Naive thymus-derived CD8-positive, alpha-beta T cell (primary cell): ENCODE measurements at regions of chr1 and their contacts with region 1.

Region 1: DNA sequence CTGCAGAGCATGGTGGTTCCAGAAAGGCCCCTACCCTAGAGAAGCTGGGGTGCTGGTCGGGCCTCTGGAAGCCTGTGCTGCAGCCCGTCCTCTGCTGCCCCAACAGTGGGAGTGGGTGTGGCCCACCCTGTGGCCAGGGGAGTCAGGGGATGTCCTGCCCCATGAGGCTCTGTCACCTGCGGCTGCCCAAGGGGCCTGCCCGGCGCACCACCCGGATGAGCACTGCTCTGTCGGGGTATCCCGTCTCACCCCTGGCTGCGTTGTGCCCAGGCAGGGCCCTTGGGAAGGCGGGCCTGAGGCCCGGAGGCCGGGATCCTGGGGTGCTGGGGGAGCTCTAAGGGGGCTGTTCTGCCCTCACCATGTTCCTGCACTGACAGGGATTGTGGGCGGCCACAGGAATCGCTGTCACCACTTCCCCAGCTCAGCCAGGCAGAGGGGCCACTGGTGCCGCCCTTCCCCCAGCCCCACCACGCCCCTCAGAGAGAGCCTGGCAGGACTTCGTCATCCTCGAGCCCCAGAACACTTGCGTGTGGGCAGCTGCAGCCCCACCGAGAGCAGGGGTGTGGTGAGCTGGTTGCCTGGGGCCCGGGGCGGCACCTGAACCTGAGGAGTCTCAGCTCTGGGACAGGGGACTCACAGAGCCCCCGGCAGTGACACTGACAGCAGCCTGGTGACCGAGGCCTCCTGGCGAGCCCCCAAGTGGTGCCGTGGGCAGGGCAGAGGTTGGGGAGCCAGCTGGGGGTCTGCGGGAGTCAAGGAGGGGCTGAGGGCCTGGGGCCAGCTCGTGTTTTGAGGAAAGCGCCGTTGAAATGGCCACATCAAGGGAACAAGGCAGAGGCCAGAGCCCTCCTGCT is 20.2 kb downstream of the PANK4 start:
- DNase-seq: no peak
- ATAC-seq: peak; percentile 9 to 16
- H3K4me3 Mint-ChIP-seq: no peak overlapping the region
- H3K27ac Mint-ChIP-seq: no peak overlapping the region
- H3K4me1 Mint-ChIP-seq: peaks cover 0 to 4% (median 0%) of the 10 kb centered on the region in 4 donors
- H3K27me3 Mint-ChIP-seq: no peaks in the 10 kb centered on the region

Region 2: DNA sequence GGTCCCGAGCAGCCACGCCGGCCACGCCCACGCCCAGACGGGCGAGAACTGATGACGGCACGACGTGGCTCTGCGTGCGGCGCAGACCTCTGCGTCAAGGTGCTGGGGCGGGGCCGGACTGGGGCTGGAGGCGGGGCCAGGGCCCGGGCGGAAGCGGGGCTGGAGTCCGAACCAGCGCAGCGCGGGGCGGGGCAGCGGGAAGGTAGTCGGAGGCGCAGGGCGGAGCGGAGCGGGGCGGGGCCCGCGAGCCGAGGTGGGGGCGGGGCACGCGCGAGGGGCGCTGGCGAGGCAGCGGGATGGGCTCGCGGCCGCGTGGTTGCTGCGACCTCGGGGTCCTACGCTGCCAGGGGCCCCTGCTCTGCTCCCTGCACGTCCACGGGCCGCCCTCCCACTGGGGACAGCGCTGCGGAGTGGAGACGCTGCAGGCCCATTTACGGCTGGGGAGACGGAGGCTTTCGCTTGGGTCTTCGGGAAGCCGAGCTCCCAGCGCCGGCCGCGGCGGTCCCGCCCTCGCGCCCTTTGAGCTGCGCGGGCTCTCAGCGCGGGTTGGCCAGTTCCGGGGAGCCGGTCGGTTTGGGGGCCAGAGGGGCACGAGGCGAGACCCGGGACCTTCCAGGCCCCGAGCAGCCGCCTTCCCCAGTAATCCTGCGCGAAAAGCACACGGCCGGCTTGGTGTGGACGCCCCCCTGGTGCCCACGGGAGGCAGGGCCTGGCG is 93.6 kb before region 1 on chr1 and contains the start of gene PEX10:
- POLR2A ChIA-PET with region 1: no interaction called
- DNase-seq: peak; percentile 96 to 100 (median 98)
- ATAC-seq: peak; percentile 78 to 88
- H3K4me3 Mint-ChIP-seq: peak within 1 kb of the TSS; percentile 77 to 91 (median 86)
- H3K27ac Mint-ChIP-seq: peak within 1 kb of the TSS; percentile 55 to 96 (median 87)
- H3K4me1 Mint-ChIP-seq: peaks cover 27 to 54% (median 41%) of the 10 kb centered on the region in 4 donors
- H3K27me3 Mint-ChIP-seq: no peaks in the 10 kb centered on the region
- polyA plus RNA-seq, gene PEX10: 7.5 to 10.4 (median 9.1) TPM

Region 3: DNA sequence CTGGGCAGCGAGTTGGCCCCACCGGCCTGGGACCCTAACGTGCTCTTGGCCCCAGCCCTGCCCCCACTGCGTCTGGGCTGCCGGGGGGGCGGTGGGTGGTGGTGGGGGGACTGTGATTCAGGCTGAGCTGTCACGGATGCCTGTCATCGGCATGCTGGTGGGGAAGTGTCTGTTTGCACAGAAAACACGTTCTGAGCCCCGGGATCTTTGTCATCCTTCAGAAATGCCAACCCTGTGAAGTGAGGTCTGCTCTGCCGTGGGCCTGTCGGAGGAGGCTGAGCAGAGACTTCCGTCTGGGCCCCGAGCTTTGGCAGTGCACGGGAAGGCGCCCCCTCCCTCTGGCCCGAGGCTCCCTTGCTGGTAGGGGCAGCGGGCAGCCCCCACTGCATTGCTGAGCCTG is 54.5 kb before region 1 on chr1:
- POLR2A ChIA-PET with region 1: no interaction called
- DNase-seq: no peak
- ATAC-seq: no peak
- H3K4me3 Mint-ChIP-seq: no peak overlapping the region
- H3K27ac Mint-ChIP-seq: no peak overlapping the region
- H3K4me1 Mint-ChIP-seq: peaks cover 0 to 7% (median 1%) of the 10 kb centered on the region in 4 donors
- H3K27me3 Mint-ChIP-seq: no peaks in the 10 kb centered on the region

Region 4: DNA sequence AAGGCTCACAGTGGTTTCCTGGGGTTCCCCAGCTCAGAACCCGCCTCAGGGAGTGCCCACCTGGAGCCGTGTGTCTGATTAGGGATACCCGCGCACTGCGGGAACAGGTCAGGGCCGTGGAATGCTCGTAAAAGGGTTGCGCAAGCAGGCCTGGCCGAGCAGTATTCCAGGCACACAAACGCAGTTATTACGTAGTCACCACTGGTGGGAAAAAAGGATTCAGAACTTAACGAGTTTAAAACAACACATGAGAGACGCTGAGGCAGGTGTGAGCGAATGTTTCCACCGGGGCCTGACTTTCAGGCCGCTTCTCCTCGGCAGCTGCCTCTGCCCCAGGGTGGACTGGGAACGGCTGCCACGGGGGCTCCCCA is 11.9 kb before region 1 on chr1:
- POLR2A ChIA-PET with region 1: interaction called, 17 read pairs
- DNase-seq: no peak
- ATAC-seq: no peak
- H3K4me3 Mint-ChIP-seq: peak overlapping the region in 7 of 10 donors; percentile 55 to 80 (median 72)
- H3K27ac Mint-ChIP-seq: peak overlapping the region; percentile 82 to 95 (median 92)
- H3K4me1 Mint-ChIP-seq: peaks cover 20 to 63% (median 38%) of the 10 kb centered on the region in 4 donors
- H3K27me3 Mint-ChIP-seq: no peaks in the 10 kb centered on the region

Region 5: GRCh38 chr1:2556277-2556677 is 50.0 kb after region 1 on chr1 and contains the start of gene TNFRSF14:
- POLR2A ChIA-PET with region 1: no interaction called
- DNase-seq: peak; percentile 53 to 87 (median 74)
- ATAC-seq: peak; percentile 73 to 79
- H3K4me3 Mint-ChIP-seq: peak within 1 kb of the TSS; percentile 91 to 99 (median 98)
- H3K27ac Mint-ChIP-seq: peak within 1 kb of the TSS; percentile 93 to 99 (median 98)
- H3K4me1 Mint-ChIP-seq: peaks cover 28 to 62% (median 44%) of the 10 kb centered on the region in 4 donors
- H3K27me3 Mint-ChIP-seq: no peaks in the 10 kb centered on the region
- polyA plus RNA-seq, gene TNFRSF14: 45.8 to 61.6 (median 48.9) TPM